T-cell (primary cell): ENCODE measurements at regions of chrX and their contacts with region 1.

Region 1: DNA sequence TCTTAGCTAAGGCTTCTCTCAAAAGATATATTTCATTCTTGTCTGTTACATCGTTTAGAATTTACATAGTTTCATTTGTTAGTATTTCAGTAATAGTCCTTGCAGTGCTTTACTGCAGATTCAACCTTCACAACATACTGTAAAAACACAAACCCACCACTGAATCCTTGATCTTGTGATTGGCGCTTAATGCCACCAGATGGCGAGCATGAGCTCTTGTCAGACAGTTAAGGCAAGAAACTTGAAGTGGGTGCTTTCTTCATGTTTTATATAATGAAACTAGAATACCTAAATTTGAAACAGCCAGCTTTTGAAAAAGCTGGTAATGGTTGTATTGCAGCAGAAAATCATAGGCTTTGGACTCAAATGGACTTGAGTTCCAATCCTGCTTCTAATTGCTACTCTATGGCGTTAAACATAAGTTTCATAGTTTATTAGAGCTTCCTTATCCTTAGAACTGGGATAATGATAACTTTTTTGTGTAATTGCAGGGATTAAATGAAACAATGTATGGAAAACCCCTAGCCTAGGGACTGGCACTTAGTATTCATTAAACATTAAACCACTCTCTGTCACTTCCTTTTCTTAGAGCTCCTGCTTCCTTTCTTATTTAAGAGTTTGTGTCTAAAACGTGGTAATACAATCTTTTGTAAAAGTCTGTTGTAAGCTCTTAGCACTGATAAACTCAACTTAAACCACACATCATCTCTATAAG is 95.1 kb downstream of the USP9X start:
- DNase-seq: peak; percentile 5 to 72 (median 37)
- ATAC-seq: peak; percentile 66 to 73 (median 68)
- H3K4me3 ChIP-seq: no peak overlapping the region
- H3K4me3 Mint-ChIP-seq: no peak overlapping the region
- H3K27ac ChIP-seq: peak overlapping the region; percentile 28
- H3K27ac Mint-ChIP-seq: peak overlapping the region; percentile 61 to 80
- H3K4me1 ChIP-seq: peaks cover 4% of the 10 kb centered on the region in 2 experiments
- H3K4me1 Mint-ChIP-seq: peaks cover 39 to 53% (median 46%) of the 10 kb centered on the region in 3 donors
- H3K27me3 ChIP-seq: no peaks in the 10 kb centered on the region
- H3K27me3 Mint-ChIP-seq: no peaks in the 10 kb centered on the region

Region 2: GRCh38 chrX:39309018-39309635 is 1871.2 kb before region 1 on chrX:
- CTCF ChIA-PET with region 1: no interaction called
- POLR2A ChIA-PET with region 1: interaction called in 1 of 2 experiments, 13 read pairs
- DNase-seq: peak in 24 of 35 experiments; percentile 3 to 66 (median 27)
- ATAC-seq: peak; percentile 32 to 85 (median 46)
- H3K4me3 ChIP-seq: no peak overlapping the region
- H3K4me3 Mint-ChIP-seq: peak overlapping the region in 1 of 3 donors; percentile 72
- H3K27ac ChIP-seq: peak overlapping the region; percentile 93
- H3K27ac Mint-ChIP-seq: peak overlapping the region; percentile 89 to 100
- H3K4me1 ChIP-seq: peaks cover 20 to 48% of the 10 kb centered on the region in 2 experiments
- H3K4me1 Mint-ChIP-seq: peaks cover 66 to 79% (median 76%) of the 10 kb centered on the region in 3 donors
- H3K27me3 ChIP-seq: no peaks in the 10 kb centered on the region
- H3K27me3 Mint-ChIP-seq: peaks cover 0 to 12% of the 10 kb centered on the region in 2 donors

Region 3: DNA sequence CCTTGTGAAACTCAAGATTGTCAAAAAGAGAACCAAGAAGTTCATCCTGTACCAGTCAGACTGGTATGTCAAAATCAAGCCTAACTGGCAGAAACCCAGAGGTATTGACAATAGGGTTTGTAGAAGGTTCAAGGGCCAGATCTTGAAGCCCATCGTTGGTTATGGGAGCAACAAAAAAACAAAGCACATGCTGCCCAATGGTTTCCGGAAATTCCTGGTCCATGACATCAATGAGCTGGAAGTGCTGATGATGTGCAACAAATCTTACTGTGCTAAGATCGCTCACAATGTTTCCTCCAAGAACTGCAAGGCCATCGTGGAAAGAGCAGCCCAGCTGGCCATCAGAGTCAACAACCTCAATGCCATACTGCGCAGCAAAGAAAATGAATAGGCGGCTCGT is 272.4 kb before region 1 on chrX:
- CTCF ChIA-PET with region 1: no interaction called
- POLR2A ChIA-PET with region 1: no interaction called
- DNase-seq: no peak
- ATAC-seq: no peak
- H3K4me3 ChIP-seq: no peak overlapping the region
- H3K4me3 Mint-ChIP-seq: no peak overlapping the region
- H3K27ac ChIP-seq: no peak overlapping the region
- H3K27ac Mint-ChIP-seq: no peak overlapping the region
- H3K4me1 ChIP-seq: no peaks in the 10 kb centered on the region
- H3K4me1 Mint-ChIP-seq: no peaks in the 10 kb centered on the region
- H3K27me3 ChIP-seq: no peaks in the 10 kb centered on the region
- H3K27me3 Mint-ChIP-seq: peaks cover 0 to 10% of the 10 kb centered on the region in 2 donors

Region 4: DNA sequence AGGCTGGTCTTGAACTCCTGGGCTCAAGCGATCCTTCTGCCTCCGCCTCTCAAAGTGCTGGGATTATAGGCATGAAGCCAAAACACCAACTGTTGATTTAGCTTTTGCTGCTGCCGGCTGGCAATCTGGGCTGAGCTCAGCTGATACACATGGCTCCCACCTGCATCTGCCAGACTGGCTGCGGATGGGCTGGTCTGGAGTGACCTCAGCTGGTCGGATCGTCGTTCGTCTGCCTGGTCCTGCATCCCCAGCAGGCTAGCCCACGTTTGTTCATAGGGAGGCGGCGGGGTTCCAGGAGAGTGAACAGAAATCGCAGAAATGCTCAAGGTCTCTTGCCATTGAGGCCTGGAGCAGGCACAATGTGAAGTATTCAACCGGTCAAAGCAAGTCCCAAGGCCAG is 79.2 kb after region 1 on chrX:
- CTCF ChIA-PET with region 1: interaction called, 5 to 12 read pairs
- POLR2A ChIA-PET with region 1: no interaction called
- DNase-seq: no peak
- ATAC-seq: no peak
- H3K4me3 ChIP-seq: no peak overlapping the region
- H3K4me3 Mint-ChIP-seq: no peak overlapping the region
- H3K27ac ChIP-seq: no peak overlapping the region
- H3K27ac Mint-ChIP-seq: no peak overlapping the region
- H3K4me1 ChIP-seq: no peaks in the 10 kb centered on the region
- H3K4me1 Mint-ChIP-seq: no peaks in the 10 kb centered on the region
- H3K27me3 ChIP-seq: no peaks in the 10 kb centered on the region
- H3K27me3 Mint-ChIP-seq: peaks cover 0 to 20% of the 10 kb centered on the region in 2 donors

Region 5: GRCh38 chrX:41322821-41323603 is 142.7 kb after region 1 on chrX:
- CTCF ChIA-PET with region 1: no interaction called
- POLR2A ChIA-PET with region 1: no interaction called
- DNase-seq: no peak
- ATAC-seq: no peak
- H3K4me3 ChIP-seq: no peak overlapping the region
- H3K4me3 Mint-ChIP-seq: no peak overlapping the region
- H3K27ac ChIP-seq: no peak overlapping the region
- H3K27ac Mint-ChIP-seq: no peak overlapping the region
- H3K4me1 ChIP-seq: no peaks in the 10 kb centered on the region
- H3K4me1 Mint-ChIP-seq: no peaks in the 10 kb centered on the region
- H3K27me3 ChIP-seq: no peaks in the 10 kb centered on the region
- H3K27me3 Mint-ChIP-seq: no peaks in the 10 kb centered on the region